AG04450 (cell line): ENCODE measurements at regions of chr6 and their contacts with region 1.

Region 1: DNA sequence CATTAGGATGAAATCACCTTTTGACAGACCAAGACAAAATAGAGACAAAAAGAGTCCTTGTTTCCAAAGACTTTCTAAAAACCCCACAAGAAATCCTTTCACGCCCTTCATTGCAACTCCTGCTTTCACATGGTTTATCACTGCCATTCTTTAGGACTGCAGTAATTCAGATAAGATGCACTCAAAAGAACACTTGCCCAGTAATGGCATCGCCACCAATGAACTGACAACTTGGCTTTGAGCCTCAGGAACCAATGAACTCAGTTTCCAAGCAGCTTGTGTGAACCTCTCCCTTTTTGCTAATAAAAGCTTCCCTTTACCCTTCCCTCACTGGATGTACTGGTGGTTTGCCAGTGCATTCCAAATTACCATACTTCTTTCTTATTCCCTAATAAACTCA is 21.8 kb downstream of the OSTM1 start:
- DNase-seq: no peak
- H3K4me3 ChIP-seq: no peak overlapping the region
- H3K27ac ChIP-seq: no peak overlapping the region
- H3K27me3 ChIP-seq: no peaks in the 10 kb centered on the region
- CTCF ChIP-seq: no peak

Region 2: GRCh38 chr6:108039681-108040080 is 13.0 kb before region 1 on chr6:
- CTCF ChIA-PET with region 1: interaction called, 29 read pairs
- POLR2A ChIA-PET with region 1: no interaction called
- DNase-seq: no peak
- H3K4me3 ChIP-seq: no peak overlapping the region
- H3K27ac ChIP-seq: no peak overlapping the region
- H3K27me3 ChIP-seq: no peaks in the 10 kb centered on the region
- CTCF ChIP-seq: no peak